K562 (cell line): ENCODE measurements at regions of chr4 and their contacts with region 1.

Region 1: DNA sequence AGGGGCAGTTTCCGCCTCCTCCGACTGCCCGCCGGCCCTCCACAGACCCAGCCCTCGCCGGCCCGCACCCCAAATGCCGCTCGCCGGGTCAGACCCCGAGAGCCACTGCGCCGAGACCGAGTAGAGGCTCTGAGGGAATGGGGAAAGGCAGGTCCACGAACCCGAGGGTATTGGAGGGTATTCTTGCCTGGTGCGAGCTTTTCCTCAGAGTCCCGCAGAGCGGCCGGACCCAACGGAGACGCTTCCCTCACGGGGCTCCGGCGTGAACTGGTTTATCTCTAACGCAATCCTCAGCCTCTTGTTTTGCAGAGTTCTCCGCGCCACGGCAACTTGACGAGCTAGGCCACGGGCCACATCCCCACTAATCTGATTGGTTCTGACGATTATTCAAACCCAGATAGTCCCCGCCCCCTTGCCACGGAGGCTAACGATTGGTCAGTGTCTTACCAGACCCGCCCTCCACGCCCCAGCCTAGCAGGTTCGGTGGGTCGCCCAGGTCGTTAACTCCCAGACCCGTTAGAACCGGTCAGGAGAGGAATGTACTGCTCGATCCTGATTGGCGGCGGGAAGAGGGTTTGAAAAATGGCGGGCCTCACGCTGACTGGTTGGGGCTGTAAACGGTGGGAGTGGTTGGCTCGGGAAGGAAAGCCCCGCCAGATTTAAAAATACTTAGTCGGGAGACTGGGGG is at the start of gene HMGB2:
- DNase-seq: peak; percentile 98 to 100 (median 99)
- ATAC-seq: peak; percentile 88
- H3K4me3 ChIP-seq: peak within 1 kb of the TSS; percentile 95
- H3K27ac ChIP-seq: peak within 1 kb of the TSS; percentile 99
- H3K4me1 ChIP-seq: peaks cover 4 to 13% of the 10 kb centered on the region in 2 experiments; a peak in 4 of 5 replicates
- H3K27me3 ChIP-seq: no peaks in the 10 kb centered on the region
- CTCF ChIP-seq: no peak
- EP300 ChIP-seq: peak; percentile 58
- POLR2A ChIP-seq: peak; percentile 99
- RAD21 ChIP-seq: no peak
- polyA plus RNA-seq, gene HMGB2: 596 to 814 TPM

Region 2: DNA sequence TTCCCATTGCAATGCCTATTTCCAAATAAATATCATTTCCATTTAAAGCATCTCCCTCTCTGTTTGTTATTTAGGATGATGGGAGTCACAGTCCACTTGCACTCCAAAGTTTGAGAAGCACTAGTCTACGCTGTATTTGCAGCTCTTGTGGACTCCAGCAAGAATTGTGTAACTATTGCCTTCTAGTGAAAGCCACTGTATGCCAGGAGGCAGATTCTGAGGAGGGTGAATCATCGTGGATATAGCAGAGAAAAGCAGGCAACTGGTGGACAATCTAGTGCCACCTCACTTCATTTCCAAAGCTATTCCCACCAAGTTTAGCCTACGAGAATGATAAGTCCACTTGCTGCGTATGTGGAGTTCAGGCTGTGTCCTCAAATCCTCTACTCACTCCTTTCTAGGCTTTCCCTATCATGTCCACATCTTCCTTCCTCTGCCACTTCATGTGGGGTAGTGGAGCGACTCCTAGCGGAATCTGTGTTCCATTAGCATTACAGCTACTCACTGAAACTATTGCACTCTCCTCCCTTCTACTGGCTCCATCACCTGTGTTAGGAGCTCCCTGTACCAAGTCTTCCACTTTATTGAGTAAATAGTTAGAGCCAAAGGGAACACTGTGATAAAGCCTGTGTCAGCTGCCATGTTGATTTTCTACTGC is 667.4 kb before region 1 on chr4:
- CTCF ChIA-PET with region 1: no interaction called
- POLR2A ChIA-PET with region 1: no interaction called
- in situ Hi-C with region 1: no loop called
- intact Hi-C with region 1: no loop called
- DNase-seq: peak in 1 of 4 experiments; percentile 9
- ATAC-seq: no peak
- H3K4me3 ChIP-seq: no peak overlapping the region
- H3K27ac ChIP-seq: no peak overlapping the region
- H3K4me1 ChIP-seq: no peaks in the 10 kb centered on the region
- H3K27me3 ChIP-seq: no peaks in the 10 kb centered on the region
- CTCF ChIP-seq: peak in 2 of 3 experiments; percentile 29 to 32; a peak in 1 of 6 replicates
- EP300 ChIP-seq: no peak
- POLR2A ChIP-seq: no peak
- RAD21 ChIP-seq: peak in 1 of 2 experiments; percentile 28; a peak in 3 of 4 replicates

Region 3: GRCh38 chr4:173346074-173346473 is 11.8 kb after region 1 on chr4:
- CTCF ChIA-PET with region 1: no interaction called
- POLR2A ChIA-PET with region 1: interaction called, 39 read pairs
- in situ Hi-C with region 1: no loop called
- intact Hi-C with region 1: no loop called
- DNase-seq: no peak
- ATAC-seq: no peak
- H3K4me3 ChIP-seq: no peak overlapping the region
- H3K27ac ChIP-seq: no peak overlapping the region
- H3K4me1 ChIP-seq: no peaks in the 10 kb centered on the region
- H3K27me3 ChIP-seq: no peaks in the 10 kb centered on the region
- CTCF ChIP-seq: no peak
- EP300 ChIP-seq: no peak
- POLR2A ChIP-seq: no peak
- RAD21 ChIP-seq: no peak

Region 4: DNA sequence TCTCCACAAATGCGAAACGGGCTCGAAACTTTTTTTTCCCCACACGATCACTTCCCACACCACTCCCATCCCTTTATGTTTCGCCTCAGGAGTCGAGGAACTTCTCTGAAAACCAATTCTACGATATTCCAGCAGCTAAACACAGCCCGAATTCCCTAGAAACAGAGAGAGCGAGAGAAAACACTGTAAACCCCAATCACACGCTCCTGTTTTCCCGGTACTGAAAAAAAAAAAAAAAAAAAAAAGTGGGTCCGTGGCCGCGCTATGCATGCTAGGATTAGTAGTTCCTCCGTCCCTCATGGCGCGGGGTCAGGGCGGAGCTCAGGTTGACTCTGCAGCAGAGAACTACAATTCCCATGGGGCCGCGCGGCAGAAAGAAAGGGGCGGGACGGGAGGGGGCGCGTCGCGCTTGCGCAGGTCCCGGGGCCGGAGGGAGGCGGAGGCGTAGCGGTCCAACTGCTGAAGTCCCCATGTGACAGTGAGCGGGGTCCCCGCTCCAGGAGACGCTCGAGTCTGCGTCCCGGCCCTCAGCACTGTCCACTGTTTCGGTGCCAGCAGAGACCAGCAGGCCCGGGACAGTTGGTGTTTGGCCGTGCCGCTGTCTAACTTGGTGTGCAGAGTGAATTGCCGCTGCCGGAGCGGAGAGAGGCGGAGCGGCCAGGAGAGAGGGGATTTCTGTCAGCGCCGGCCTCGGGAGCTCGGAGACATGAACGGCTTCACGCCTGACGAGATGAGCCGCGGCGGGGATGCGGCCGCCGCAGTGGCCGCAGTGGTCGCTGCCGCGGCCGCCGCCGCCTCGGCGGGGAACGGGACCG is 36.5 kb after region 1 on chr4 and contains the start of gene SAP30:
- CTCF ChIA-PET with region 1: no interaction called
- POLR2A ChIA-PET with region 1: interaction called, 123 read pairs
- in situ Hi-C with region 1: loop called (anchors 5 kb)
- intact Hi-C with region 1: loop called (anchors 1 kb)
- DNase-seq: peak; percentile 96 to 98 (median 97)
- ATAC-seq: peak; percentile 89
- H3K4me3 ChIP-seq: peak within 1 kb of the TSS; percentile 81
- H3K27ac ChIP-seq: peak within 1 kb of the TSS; percentile 94
- H3K4me1 ChIP-seq: peaks cover 3 to 6% of the 10 kb centered on the region in 2 experiments; a peak in 3 of 5 replicates
- H3K27me3 ChIP-seq: no peaks in the 10 kb centered on the region
- CTCF ChIP-seq: no peak
- EP300 ChIP-seq: no peak
- POLR2A ChIP-seq: peak; percentile 86
- RAD21 ChIP-seq: no peak
- polyA plus RNA-seq, gene SAP30: 5.9 to 6.9 TPM

Region 5: GRCh38 chr4:173413036-173413435 is 78.8 kb after region 1 on chr4:
- CTCF ChIA-PET with region 1: no interaction called
- POLR2A ChIA-PET with region 1: interaction called, 9 read pairs
- in situ Hi-C with region 1: no loop called
- intact Hi-C with region 1: loop called (anchors 5 kb)
- DNase-seq: no peak
- ATAC-seq: no peak
- H3K4me3 ChIP-seq: no peak overlapping the region
- H3K27ac ChIP-seq: no peak overlapping the region
- H3K4me1 ChIP-seq: no peaks in the 10 kb centered on the region
- H3K27me3 ChIP-seq: no peaks in the 10 kb centered on the region
- CTCF ChIP-seq: no peak
- EP300 ChIP-seq: no peak
- POLR2A ChIP-seq: no peak
- RAD21 ChIP-seq: no peak

Region 6: DNA sequence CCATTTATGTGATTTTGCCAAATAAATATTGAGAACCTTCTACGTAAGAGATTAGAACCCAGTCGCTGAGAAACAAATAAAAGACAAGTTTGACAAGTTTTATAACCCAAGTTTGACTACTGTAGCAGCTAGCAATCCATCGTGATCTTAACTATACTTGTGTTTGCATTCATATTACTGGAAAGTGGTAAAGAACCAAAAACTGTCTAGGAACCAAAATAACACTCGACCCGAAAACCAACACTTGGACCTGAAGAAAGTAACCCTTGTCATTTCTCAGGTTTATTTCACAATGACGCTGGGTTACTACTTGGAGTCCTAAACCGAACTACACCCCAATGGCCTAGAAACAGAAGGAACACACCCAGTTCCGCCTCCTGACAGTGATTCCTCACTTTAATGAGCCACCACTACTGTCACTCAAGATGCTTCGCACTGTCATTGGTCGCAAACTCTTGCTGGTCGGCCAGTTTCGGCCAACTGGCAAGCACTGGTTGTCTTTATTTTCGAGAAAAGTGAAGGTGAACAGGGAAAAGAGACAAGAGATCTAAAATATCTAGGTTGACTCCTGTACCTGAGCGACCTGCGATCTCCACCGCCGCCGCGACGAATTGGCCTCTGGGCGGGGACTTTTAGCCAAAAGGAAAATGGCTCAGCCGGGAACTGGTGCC is 948.7 kb after region 1 on chr4:
- CTCF ChIA-PET with region 1: no interaction called
- POLR2A ChIA-PET with region 1: interaction called, 5 read pairs
- in situ Hi-C with region 1: no loop called
- intact Hi-C with region 1: loop called (anchors 10 kb)
- DNase-seq: peak; percentile 82 to 95 (median 86)
- ATAC-seq: peak; percentile 84
- H3K4me3 ChIP-seq: peak overlapping the region; percentile 65
- H3K27ac ChIP-seq: peak overlapping the region; percentile 100
- H3K4me1 ChIP-seq: peaks cover 0 to 6% of the 10 kb centered on the region in 2 experiments; a peak in 3 of 5 replicates
- H3K27me3 ChIP-seq: no peaks in the 10 kb centered on the region
- CTCF ChIP-seq: no peak
- EP300 ChIP-seq: no peak
- POLR2A ChIP-seq: no peak
- RAD21 ChIP-seq: no peak